ENCODE measurements at regions of chr7 and their contacts with region 1.

Region 1: GRCh38 chr7:149440222-149440621 is 20.6 kb downstream of the ZNF777 start:
- DNase-seq: no peak
- ATAC-seq: no peak
- H3K4me3 ChIP-seq: no peak overlapping the region
- H3K27ac ChIP-seq: no peak overlapping the region
- H3K4me1 ChIP-seq: no peaks in the 10 kb centered on the region
- CTCF ChIP-seq: no peak
- EP300 ChIP-seq: no peak
- POLR2A ChIP-seq: no peak
- RAD21 ChIP-seq: no peak

Region 2: GRCh38 chr7:149422129-149422913 is 17.9 kb before region 1 on chr7:
- CTCF ChIA-PET with region 1: interaction called, 11 read pairs
- POLR2A ChIA-PET with region 1: no interaction called
- DNase-seq: peak; percentile 85 to 86
- ATAC-seq: peak; percentile 95 to 97
- H3K4me3 ChIP-seq: peak overlapping the region; percentile 49
- H3K27ac ChIP-seq: peak overlapping the region; percentile 78 to 93
- H3K4me1 ChIP-seq: no peaks in the 10 kb centered on the region
- CTCF ChIP-seq: peak; percentile 100
- EP300 ChIP-seq: no peak
- POLR2A ChIP-seq: peak; percentile 48
- RAD21 ChIP-seq: peak; percentile 37 to 72

Region 3: GRCh38 chr7:149460493-149461277 is 20.5 kb after region 1 on chr7 and contains the start of gene ZNF777:
- CTCF ChIA-PET with region 1: interaction called, 11 read pairs
- POLR2A ChIA-PET with region 1: interaction called, 3 read pairs
- DNase-seq: peak; percentile 91 to 96
- ATAC-seq: peak; percentile 96 to 99
- H3K4me3 ChIP-seq: peak within 1 kb of the TSS; percentile 64
- H3K27ac ChIP-seq: peak within 1 kb of the TSS; percentile 88 to 99
- H3K4me1 ChIP-seq: peaks cover 12% of the 10 kb centered on the region
- CTCF ChIP-seq: peak; percentile 69
- EP300 ChIP-seq: no peak
- POLR2A ChIP-seq: peak; percentile 69
- RAD21 ChIP-seq: no peak
- polyA plus RNA-seq, gene ZNF777: 4.9 and 5.4 TPM in 2 replicates

Measured in A549 (cell line).